Activated T-helper 2 cell treated with anti-CD3 and anti-CD28 coated beads, Interferon-gamma antibody, Interleukin-2, Interleukin-4, amounts not matched to agents 10 μg/mL and 5 μg/mL and 100 μg/mL, durations not matched to agents 14 hours and 24 hours and 36 hours (primary cell): ENCODE measurements at regions of chr12 and their contacts with region 1.

Region 1: DNA sequence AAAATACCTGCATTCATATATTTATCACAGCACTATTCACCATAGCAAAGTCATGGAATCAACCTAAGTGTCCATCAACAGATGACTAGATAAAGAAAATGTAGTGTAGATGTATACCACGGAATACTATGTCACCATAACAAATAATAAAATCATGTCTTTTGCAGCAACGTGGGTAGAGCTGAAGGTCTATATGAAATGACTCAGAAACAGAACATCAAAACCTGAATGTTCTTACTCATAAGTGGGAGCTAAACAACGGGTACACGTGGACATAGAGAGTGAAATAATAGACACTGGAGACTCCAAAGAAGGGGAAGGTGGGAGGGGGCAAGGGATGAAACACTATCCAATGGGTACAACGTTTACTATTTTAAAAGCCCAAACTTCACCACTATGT is 37.9 kb downstream of the SLC38A1 start:
- DNase-seq: no peak
- H3K4me3 Mint-ChIP-seq: no peak overlapping the region
- H3K27ac Mint-ChIP-seq: peak overlapping the region; percentile 42
- H3K4me1 Mint-ChIP-seq: peaks cover 47% of the 10 kb centered on the region
- H3K27me3 Mint-ChIP-seq: no peaks in the 10 kb centered on the region

Region 2: DNA sequence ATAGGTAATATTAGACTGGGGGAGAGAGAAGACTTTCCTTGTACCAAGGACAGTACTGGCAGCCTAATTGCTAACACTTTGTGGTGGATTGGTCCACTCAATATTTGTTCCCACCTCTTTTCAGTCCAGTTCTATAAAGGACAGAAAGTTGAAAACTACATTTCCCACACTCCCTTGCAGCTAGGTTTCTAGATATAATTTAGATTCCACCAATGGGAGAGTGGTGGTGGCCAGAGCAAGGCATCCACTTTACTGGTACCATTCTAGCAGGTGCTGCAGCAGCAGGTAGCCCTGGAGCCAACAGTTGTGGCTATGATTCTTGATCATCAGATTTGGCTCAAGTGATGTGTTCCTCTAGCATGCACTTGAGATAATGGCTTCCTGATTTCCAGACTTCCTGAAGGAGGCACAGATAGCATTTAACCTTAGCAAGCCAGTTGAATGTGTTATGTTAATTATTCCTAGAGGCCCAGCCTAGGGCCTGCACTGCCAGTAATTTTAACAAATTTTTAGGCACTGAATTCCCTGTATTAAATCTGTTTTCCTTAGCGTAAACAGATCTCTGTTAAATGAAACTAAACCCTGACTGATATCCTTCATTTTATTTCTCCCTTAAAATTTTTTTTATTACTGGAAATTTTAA is 13.4 kb after region 1 on chr12:
- intact Hi-C with region 1: loop called (anchors 2 kb)
- DNase-seq: no peak
- H3K4me3 Mint-ChIP-seq: no peak overlapping the region
- H3K27ac Mint-ChIP-seq: no peak overlapping the region
- H3K4me1 Mint-ChIP-seq: peaks cover 62% of the 10 kb centered on the region
- H3K27me3 Mint-ChIP-seq: no peaks in the 10 kb centered on the region

Region 3: GRCh38 chr12:46675736-46676135 is 444.8 kb after region 1 on chr12:
- intact Hi-C with region 1: no loop called
- DNase-seq: no peak
- H3K4me3 Mint-ChIP-seq: no peak overlapping the region
- H3K27ac Mint-ChIP-seq: no peak overlapping the region
- H3K4me1 Mint-ChIP-seq: peaks cover 17% of the 10 kb centered on the region
- H3K27me3 Mint-ChIP-seq: peaks cover 5% of the 10 kb centered on the region